ENCODE measurements at regions of chr6 and their contacts with region 1.

Region 1: GRCh38 chr6:36678518-36679027 is at the start of gene CDKN1A:
- DNase-seq: peak; percentile 90
- H3K4me3 Mint-ChIP-seq: peak within 1 kb of the TSS; percentile 87
- H3K27ac Mint-ChIP-seq: peak within 1 kb of the TSS; percentile 97
- H3K4me1 Mint-ChIP-seq: peaks cover 29% of the 10 kb centered on the region
- H3K27me3 Mint-ChIP-seq: no peaks in the 10 kb centered on the region
- CTCF ChIP-seq: no peak
- total RNA-seq, gene CDKN1A: 407 and 489 TPM in 2 replicates

Region 2: DNA sequence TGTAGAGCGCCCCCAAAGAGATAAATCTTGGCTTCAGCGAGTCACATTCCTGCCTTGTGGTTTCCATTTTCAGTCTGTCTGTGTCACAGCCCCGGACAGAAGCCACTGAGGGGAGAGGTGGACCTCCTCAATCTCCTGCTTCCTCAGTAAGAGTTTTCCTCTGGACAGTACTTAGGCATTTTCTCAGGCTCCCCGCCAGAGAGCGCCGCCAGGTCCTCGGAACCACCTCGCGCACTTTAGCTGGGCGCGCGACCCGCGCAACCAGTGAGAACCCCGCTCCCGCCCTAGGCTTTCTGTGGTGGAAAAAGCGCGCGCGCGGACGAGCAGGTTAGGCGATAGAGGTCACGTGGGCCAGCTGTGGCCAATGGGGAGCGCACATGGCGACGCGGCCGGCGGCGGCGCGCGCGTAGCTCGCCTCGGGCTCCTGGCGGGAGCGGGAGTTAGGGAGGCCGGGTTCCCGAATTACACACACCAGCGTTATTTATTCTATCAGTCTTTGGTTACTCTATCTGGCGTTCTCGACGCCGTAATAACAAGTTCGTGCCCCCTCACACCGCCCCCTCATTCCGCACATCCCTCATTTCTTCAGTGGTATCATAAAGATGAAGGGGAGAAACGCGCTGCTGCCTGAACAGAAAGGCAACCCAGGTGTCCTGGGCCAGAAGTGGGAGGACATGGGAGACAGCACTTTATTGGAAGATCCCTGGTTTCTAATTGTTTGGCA is 255.3 kb before region 1 on chr6:
- CTCF ChIA-PET with region 1: interaction called, 3 read pairs
- POLR2A ChIA-PET with region 1: interaction called, 5 read pairs
- intact Hi-C with region 1: loop called (anchors 10 kb)
- DNase-seq: peak; percentile 98
- H3K4me3 Mint-ChIP-seq: peak overlapping the region; percentile 73
- H3K27ac Mint-ChIP-seq: peak overlapping the region; percentile 91
- H3K4me1 Mint-ChIP-seq: peaks cover 28% of the 10 kb centered on the region
- H3K27me3 Mint-ChIP-seq: no peaks in the 10 kb centered on the region
- CTCF ChIP-seq: peak; percentile 63

Region 3: DNA sequence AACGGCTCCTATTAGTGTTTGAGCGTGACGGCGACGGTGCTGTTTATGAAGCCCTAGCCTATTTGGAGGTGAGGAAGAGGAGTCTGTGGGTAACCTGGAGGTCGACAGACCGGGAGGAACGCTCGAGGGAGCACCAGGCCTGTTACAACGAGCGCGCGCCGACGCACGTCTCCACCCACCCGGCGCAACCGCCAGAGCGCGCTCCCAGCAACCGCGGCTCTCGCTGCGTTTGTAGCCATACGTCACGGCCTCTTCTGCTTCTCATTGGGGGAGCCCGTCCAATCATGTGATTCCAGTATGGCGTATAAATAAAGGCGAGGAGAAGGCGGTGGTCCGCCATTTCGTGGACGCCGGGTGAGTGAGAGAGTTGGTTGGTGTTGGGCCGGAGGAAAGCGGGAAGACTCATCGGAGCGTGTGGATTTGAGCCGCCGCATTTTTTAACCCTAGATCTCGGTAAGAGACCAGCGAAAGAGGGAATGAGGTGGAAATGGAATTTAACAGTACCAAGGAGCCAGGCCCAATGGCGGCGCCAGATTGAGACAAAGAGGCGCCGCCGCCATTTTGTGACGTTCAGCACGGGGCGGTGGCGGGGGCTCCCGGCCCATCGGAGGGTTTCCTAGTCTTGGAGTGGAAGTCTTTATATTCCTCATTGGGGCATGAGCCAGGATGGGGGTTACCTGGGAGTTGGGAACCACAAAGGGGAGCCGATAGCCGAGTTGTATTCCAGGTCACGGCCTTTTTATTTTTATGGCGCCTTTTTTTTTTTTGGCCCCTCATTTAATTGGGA is 84.4 kb before region 1 on chr6 and contains the start of gene SRSF3:
- CTCF ChIA-PET with region 1: interaction called, 5 read pairs
- POLR2A ChIA-PET with region 1: interaction called, 211 read pairs
- intact Hi-C with region 1: no loop called
- DNase-seq: peak; percentile 98
- H3K4me3 Mint-ChIP-seq: peak within 1 kb of the TSS; percentile 84
- H3K27ac Mint-ChIP-seq: peak within 1 kb of the TSS; percentile 99
- H3K4me1 Mint-ChIP-seq: peaks cover 20% of the 10 kb centered on the region
- H3K27me3 Mint-ChIP-seq: no peaks in the 10 kb centered on the region
- CTCF ChIP-seq: no peak
- total RNA-seq, gene SRSF3: 364 and 479 TPM in 2 replicates

Region 4: GRCh38 chr6:36615018-36615761 is 63.4 kb before region 1 on chr6:
- CTCF ChIA-PET with region 1: interaction called, 12 read pairs
- POLR2A ChIA-PET with region 1: interaction called, 99 read pairs
- intact Hi-C with region 1: no loop called
- DNase-seq: peak; percentile 80
- H3K4me3 Mint-ChIP-seq: no peak overlapping the region
- H3K27ac Mint-ChIP-seq: no peak overlapping the region
- H3K4me1 Mint-ChIP-seq: peaks cover 15% of the 10 kb centered on the region
- H3K27me3 Mint-ChIP-seq: no peaks in the 10 kb centered on the region
- CTCF ChIP-seq: peak; percentile 74

Region 5: GRCh38 chr6:36642913-36643817 is 35.4 kb before region 1 on chr6:
- CTCF ChIA-PET with region 1: interaction called, 5 read pairs
- POLR2A ChIA-PET with region 1: interaction called, 144 read pairs
- intact Hi-C with region 1: loop called (anchors 2 kb)
- DNase-seq: peak; percentile 95
- H3K4me3 Mint-ChIP-seq: no peak overlapping the region
- H3K27ac Mint-ChIP-seq: peak overlapping the region; percentile 31
- H3K4me1 Mint-ChIP-seq: peaks cover 14% of the 10 kb centered on the region
- H3K27me3 Mint-ChIP-seq: no peaks in the 10 kb centered on the region
- CTCF ChIP-seq: no peak

Region 6: GRCh38 chr6:36666726-36667591 is 11.6 kb before region 1 on chr6:
- CTCF ChIA-PET with region 1: interaction called, 37 read pairs
- POLR2A ChIA-PET with region 1: interaction called, 495 read pairs
- intact Hi-C with region 1: loop called (anchors 1 kb)
- DNase-seq: peak; percentile 98
- H3K4me3 Mint-ChIP-seq: no peak overlapping the region
- H3K27ac Mint-ChIP-seq: peak overlapping the region; percentile 91
- H3K4me1 Mint-ChIP-seq: peaks cover 31% of the 10 kb centered on the region
- H3K27me3 Mint-ChIP-seq: no peaks in the 10 kb centered on the region
- CTCF ChIP-seq: no peak

Measured in MCF 10A (cell line).